ENCODE measurements at regions of chr22 and their contacts with region 1.

Region 1: DNA sequence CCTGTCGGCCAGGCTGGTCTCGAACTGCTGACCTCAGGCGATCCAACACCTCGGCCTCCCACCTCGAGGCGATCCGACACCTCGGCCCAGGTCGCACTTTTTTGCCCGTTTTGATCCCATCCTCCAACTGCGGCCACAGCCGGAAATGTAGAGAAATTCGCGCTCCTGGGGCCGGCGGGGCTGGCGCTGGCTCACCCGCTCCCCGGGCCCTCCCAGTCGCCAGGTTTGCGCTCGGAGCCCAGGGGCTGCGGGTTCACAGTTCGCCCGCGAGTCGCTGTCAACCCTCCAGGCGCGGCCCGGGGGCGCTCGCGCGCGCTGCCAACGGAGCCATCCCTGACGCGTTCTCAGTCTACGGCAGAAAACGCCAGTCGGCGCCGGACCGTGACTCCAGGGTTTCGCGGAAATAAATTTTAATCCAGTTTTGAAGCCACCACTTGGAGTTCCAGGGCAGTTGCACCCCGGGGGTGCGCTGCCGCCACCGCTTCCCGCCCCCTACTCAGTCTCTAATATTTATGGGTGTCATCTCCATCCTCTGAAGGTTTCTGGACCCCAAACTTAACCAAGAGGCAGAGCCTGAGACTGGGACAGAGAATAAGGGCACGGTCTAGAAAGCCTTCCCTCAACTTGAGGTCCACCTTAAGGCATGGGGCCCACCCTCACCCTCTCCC is 1.5 kb upstream of the KLHDC7B start:
- DNase-seq: no peak
- ATAC-seq: peak; percentile 43
- H3K4me3 ChIP-seq: no peak overlapping the region
- H3K27ac ChIP-seq: peak overlapping the region; percentile 45; the same call in 1 of the 2 replicates
- H3K4me1 ChIP-seq: peaks cover 46% of the 10 kb centered on the region
- H3K27me3 ChIP-seq: peaks cover 0 to 1% of the 10 kb centered on the region in 2 experiments; a peak in 1 of 4 replicates
- CTCF ChIP-seq: peak; percentile 62 to 76 (median 72)
- EP300 ChIP-seq: no peak
- POLR2A ChIP-seq: peak; percentile 38
- RAD21 ChIP-seq: peak; percentile 38; the same call in 1 of the 2 replicates

Region 2: GRCh38 chr22:50074551-50075530 is 469.4 kb before region 1 on chr22:
- CTCF ChIA-PET with region 1: no interaction called
- POLR2A ChIA-PET with region 1: no interaction called
- RAD21 ChIA-PET with region 1: no interaction called
- SMC1A ChIA-PET with region 1: no interaction called
- in situ Hi-C with region 1: no loop called
- intact Hi-C with region 1: no loop called
- DNase-seq: no peak
- ATAC-seq: no peak
- H3K4me3 ChIP-seq: no peak overlapping the region
- H3K27ac ChIP-seq: no peak overlapping the region
- H3K4me1 ChIP-seq: no peaks in the 10 kb centered on the region
- H3K27me3 ChIP-seq: no peaks in the 10 kb centered on the region; a peak in 2 of 4 replicates
- CTCF ChIP-seq: no peak
- EP300 ChIP-seq: no peak
- POLR2A ChIP-seq: no peak
- RAD21 ChIP-seq: no peak

Region 3: DNA sequence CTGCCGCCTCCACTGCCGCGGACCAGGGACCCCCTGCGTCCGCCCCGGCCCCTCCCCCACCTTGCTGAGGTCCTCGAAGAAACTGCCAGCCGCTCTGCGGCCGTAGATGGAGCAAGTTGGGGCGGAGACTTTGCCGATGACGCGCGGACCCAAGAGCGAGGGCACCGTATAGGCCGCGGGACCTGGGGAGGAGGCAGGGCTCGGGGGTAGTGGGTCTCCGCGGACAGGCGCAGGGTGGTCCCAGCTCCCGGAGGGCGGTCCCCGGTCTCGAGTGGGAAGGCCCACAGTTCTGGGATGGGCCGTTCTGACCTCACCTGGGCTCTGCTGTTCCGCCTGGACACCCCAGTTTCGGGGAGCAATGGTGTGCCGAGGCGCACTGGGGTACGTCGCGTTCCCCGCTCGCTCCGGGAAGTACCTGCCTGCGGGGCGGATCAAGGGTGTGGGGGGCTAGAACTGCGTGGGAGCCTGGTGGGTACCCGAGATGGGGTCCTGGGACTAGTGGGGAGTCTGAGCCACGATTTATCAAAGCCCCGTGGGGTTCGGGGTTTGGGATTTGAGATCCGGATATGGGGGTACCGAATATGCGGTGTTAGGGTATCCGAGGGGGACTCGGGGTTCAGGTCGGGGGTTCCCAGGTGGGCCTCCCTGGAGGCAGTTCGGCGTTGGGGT is 13.2 kb before region 1 on chr22:
- CTCF ChIA-PET with region 1: interaction called, 37 read pairs
- POLR2A ChIA-PET with region 1: interaction called, 232 read pairs
- RAD21 ChIA-PET with region 1: interaction called, 106 read pairs
- SMC1A ChIA-PET with region 1: interaction called, 58 read pairs
- in situ Hi-C with region 1: no loop called
- intact Hi-C with region 1: no loop called
- DNase-seq: no peak
- ATAC-seq: peak; percentile 53
- H3K4me3 ChIP-seq: peak overlapping the region; percentile 78
- H3K27ac ChIP-seq: peak overlapping the region; percentile 100
- H3K4me1 ChIP-seq: peaks cover 41% of the 10 kb centered on the region
- H3K27me3 ChIP-seq: no peaks in the 10 kb centered on the region
- CTCF ChIP-seq: no peak
- EP300 ChIP-seq: no peak
- POLR2A ChIP-seq: no peak
- RAD21 ChIP-seq: no peak

Region 4: DNA sequence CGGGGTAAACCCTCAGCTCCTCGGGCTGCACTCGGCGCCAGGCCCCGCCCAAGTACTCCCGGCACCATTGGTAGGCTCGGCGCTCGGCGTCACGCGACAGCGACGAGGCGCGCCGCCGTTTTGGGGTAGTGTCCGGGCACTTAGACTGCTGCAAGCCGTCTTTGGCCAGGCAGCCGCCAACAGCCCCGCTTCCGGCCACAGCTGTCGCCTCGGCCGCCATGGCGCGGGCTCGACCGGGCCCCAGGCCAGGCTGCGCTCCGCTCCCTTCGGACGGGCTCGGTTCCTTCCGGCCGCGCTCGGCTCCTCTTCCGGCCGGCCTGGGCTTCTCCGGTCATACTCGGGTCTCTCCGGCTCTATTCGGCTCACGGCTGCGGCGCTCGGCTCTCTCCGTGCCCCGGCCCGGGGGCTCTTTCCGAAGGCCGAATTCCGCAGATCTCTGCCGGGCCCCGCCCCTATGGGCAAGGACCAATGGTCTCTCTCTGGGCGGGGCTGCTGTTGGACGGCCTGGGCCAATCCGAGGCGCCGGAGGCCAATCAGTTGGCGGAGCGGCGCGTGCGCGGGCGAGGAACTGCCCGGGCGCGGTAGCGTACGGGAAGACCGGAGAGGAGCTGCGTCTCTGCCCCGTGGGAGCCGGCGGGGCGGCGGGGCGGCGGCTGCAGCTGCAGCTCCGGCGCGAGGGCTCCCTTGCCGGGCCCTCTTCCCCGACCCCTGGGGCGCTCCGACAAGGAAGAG is 38.5 kb after region 1 on chr22 and contains the start of gene CHKB:
- CTCF ChIA-PET with region 1: interaction called, 3 read pairs
- POLR2A ChIA-PET with region 1: interaction called, 7 read pairs
- RAD21 ChIA-PET with region 1: interaction called, 3 read pairs
- SMC1A ChIA-PET with region 1: interaction called, 3 read pairs
- in situ Hi-C with region 1: no loop called
- intact Hi-C with region 1: loop called (anchors 1 kb)
- DNase-seq: peak; percentile 80
- ATAC-seq: peak; percentile 97
- H3K4me3 ChIP-seq: peak within 1 kb of the TSS; percentile 90
- H3K27ac ChIP-seq: peak within 1 kb of the TSS; percentile 94
- H3K4me1 ChIP-seq: peaks cover 15% of the 10 kb centered on the region
- H3K27me3 ChIP-seq: no peaks in the 10 kb centered on the region
- CTCF ChIP-seq: no peak
- EP300 ChIP-seq: no peak
- POLR2A ChIP-seq: peak; percentile 86
- RAD21 ChIP-seq: no peak
- polyA plus RNA-seq, gene CHKB: 10.0 to 20.6 TPM

Measured in GM12878 (cell line).